ENCODE measurements at regions of chr1 and their contacts with region 1.

Region 1: GRCh38 chr1:192639607-192640368 is 3.8 kb downstream of the RGS13 start:
- DNase-seq: no peak
- ATAC-seq: peak; percentile 92
- H3K4me3 Mint-ChIP-seq: no peak overlapping the region
- H3K27ac Mint-ChIP-seq: peak overlapping the region; percentile 71
- H3K4me1 Mint-ChIP-seq: peaks cover 20% of the 10 kb centered on the region
- H3K27me3 Mint-ChIP-seq: peaks cover 3% of the 10 kb centered on the region

Region 2: DNA sequence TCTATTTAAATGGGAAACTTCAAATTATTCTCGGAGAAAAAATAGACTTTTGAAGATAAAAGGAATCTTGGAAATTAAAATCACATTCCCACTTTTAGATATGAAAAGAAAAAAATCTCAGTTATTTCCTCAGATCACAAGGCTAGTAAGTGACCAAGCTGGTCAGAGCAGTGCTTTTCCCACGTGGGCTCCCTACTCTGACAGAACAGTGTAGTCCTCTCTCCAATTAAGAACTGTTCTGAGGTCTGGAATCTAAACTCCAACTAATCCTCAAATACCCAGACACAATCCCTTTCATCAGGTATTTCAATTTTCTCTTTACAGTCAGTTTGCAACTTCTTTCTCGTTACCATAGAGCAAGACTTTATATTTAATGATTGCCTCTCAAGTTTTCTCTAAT is 272.4 kb before region 1 on chr1:
- CTCF ChIA-PET with region 1: no interaction called
- POLR2A ChIA-PET with region 1: no interaction called
- intact Hi-C with region 1: no loop called
- DNase-seq: no peak
- ATAC-seq: no peak
- H3K4me3 Mint-ChIP-seq: no peak overlapping the region
- H3K27ac Mint-ChIP-seq: no peak overlapping the region
- H3K4me1 Mint-ChIP-seq: no peaks in the 10 kb centered on the region
- H3K27me3 Mint-ChIP-seq: no peaks in the 10 kb centered on the region

Region 3: DNA sequence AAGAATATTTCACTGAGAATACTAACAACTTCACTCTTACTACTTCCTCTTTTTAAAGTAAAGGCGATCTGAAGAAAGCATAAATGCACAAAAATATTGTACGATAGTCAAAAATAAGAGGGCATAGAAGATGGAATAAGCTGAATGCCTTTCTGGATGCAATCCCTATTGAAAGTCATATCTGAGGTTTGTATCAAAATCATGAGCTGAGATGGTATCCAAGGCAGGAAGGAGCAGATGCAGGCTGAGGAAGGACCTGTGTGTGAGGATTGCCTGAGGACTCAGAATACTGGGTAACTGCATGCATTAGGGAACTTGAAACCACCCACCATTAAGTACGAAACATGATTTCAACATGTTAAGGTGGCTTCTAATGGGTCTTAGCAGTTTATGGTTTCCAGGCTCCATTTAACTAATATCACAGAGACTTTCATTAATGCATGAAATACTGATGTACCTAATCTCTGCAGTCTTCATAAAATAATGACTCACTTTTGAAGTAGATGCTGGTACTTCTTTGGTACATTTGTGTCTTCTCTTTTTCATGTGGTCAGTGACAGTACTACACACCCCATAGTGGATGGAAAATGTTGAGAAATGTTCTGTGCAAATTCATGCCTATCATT is 93.8 kb before region 1 on chr1:
- CTCF ChIA-PET with region 1: no interaction called
- POLR2A ChIA-PET with region 1: no interaction called
- intact Hi-C with region 1: loop called in 1 of 2 experiments (anchors 5 kb)
- DNase-seq: no peak
- ATAC-seq: no peak
- H3K4me3 Mint-ChIP-seq: no peak overlapping the region
- H3K27ac Mint-ChIP-seq: no peak overlapping the region
- H3K4me1 Mint-ChIP-seq: peaks cover 49% of the 10 kb centered on the region
- H3K27me3 Mint-ChIP-seq: no peaks in the 10 kb centered on the region

Region 4: GRCh38 chr1:192654591-192655251 is 14.9 kb after region 1 on chr1:
- CTCF ChIA-PET with region 1: interaction called, 5 read pairs
- POLR2A ChIA-PET with region 1: no interaction called
- intact Hi-C with region 1: loop called (anchors 1 kb)
- DNase-seq: peak; percentile 29
- ATAC-seq: peak; percentile 88
- H3K4me3 Mint-ChIP-seq: no peak overlapping the region
- H3K27ac Mint-ChIP-seq: peak overlapping the region; percentile 45
- H3K4me1 Mint-ChIP-seq: peaks cover 12% of the 10 kb centered on the region
- H3K27me3 Mint-ChIP-seq: peaks cover 9% of the 10 kb centered on the region

Region 5: DNA sequence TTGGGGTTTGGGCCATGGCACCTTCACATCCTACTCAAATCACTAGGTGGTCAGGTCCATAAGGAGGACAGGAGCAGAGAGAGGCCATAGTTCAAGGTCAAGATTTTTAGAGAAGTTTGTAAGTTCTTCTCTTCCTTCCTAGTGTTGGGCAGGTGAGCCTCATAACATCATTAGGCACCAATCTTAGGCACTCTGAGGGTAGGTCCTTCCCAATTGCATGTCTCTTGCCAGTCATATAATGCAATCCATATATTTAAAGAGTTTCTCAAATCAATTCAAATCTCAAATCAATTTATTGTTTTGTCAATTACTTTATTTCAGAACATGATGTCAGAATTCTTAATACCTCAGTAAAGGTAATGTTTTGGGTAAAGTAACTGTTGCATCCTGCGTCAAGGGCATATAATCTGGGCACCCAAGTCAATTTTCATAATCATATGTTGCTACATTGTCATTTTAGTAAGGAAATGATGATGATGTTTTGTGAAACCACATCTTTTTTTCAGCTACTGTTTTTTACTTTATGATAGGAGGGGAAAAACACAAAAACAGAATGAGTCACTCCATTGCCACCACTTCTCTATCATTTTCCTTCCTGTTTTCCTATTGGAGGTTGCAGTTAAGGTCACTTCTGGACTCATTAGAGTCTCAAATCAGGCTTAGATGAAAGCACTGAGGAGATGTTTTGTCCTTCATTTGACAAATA is 296.7 kb after region 1 on chr1:
- CTCF ChIA-PET with region 1: no interaction called
- POLR2A ChIA-PET with region 1: no interaction called
- intact Hi-C with region 1: loop called in 1 of 2 experiments (anchors 5 kb)
- DNase-seq: no peak
- ATAC-seq: peak; percentile 85
- H3K4me3 Mint-ChIP-seq: no peak overlapping the region
- H3K27ac Mint-ChIP-seq: peak overlapping the region; percentile 12
- H3K4me1 Mint-ChIP-seq: peaks cover 18% of the 10 kb centered on the region
- H3K27me3 Mint-ChIP-seq: no peaks in the 10 kb centered on the region

Region 6: GRCh38 chr1:192983349-192983980 is 343.7 kb after region 1 on chr1:
- CTCF ChIA-PET with region 1: interaction called, 3 read pairs
- POLR2A ChIA-PET with region 1: no interaction called
- intact Hi-C with region 1: loop called in 1 of 2 experiments (anchors 2 kb)
- DNase-seq: peak; percentile 67
- ATAC-seq: peak; percentile 84
- H3K4me3 Mint-ChIP-seq: no peak overlapping the region
- H3K27ac Mint-ChIP-seq: peak overlapping the region; percentile 76
- H3K4me1 Mint-ChIP-seq: peaks cover 39% of the 10 kb centered on the region
- H3K27me3 Mint-ChIP-seq: no peaks in the 10 kb centered on the region

Measured in activated CD4-positive, alpha-beta T cell treated with anti-CD3 and anti-CD28 coated beads for 36 hours (primary cell).